H1 (cell line): ENCODE measurements at regions of chr9 and their contacts with region 1.

Region 1: GRCh38 chr9:79152306-79152705 is 419.5 kb upstream of the TLE4 start:
- DNase-seq: no peak
- H3K4me3 ChIP-seq: no peak overlapping the region
- H3K27ac ChIP-seq: no peak overlapping the region
- H3K4me1 ChIP-seq: no peaks in the 10 kb centered on the region
- H3K27me3 ChIP-seq: no peaks in the 10 kb centered on the region
- CTCF ChIP-seq: no peak
- EP300 ChIP-seq: no peak
- POLR2A ChIP-seq: no peak
- RAD21 ChIP-seq: no peak

Region 2: DNA sequence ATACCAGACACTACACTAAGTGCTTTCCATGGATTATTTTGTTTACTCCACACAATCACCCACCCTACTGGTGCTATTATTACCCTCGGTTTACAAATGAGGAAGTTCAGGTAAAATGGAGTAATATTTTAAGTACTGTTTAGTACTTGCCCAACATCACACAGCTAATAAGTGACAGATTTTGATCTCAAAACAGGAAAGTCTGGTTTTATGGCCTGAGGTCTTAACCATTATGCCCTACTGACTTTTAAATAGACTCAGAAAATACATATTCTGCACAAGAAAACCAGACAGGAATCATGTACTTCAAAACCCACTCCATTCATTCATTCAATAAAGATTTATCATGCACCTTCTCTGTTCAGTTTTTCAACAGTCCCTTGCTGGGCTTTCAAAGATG is 11.5 kb before region 1 on chr9:
- CTCF ChIA-PET with region 1: interaction called, 11 read pairs
- POLR2A ChIA-PET with region 1: interaction called, 3 read pairs
- DNase-seq: no peak
- H3K4me3 ChIP-seq: no peak overlapping the region
- H3K27ac ChIP-seq: no peak overlapping the region
- H3K4me1 ChIP-seq: no peaks in the 10 kb centered on the region
- H3K27me3 ChIP-seq: no peaks in the 10 kb centered on the region
- CTCF ChIP-seq: no peak
- EP300 ChIP-seq: no peak
- POLR2A ChIP-seq: no peak
- RAD21 ChIP-seq: no peak

Region 3: GRCh38 chr9:79254900-79255650 is 102.8 kb after region 1 on chr9:
- CTCF ChIA-PET with region 1: interaction called, 11 read pairs
- POLR2A ChIA-PET with region 1: no interaction called
- DNase-seq: no peak
- H3K4me3 ChIP-seq: no peak overlapping the region
- H3K27ac ChIP-seq: no peak overlapping the region
- H3K4me1 ChIP-seq: peaks cover 0 to 9% (median under 1%) of the 10 kb centered on the region in 4 experiments; a peak in 3 of 7 replicates
- H3K27me3 ChIP-seq: no peaks in the 10 kb centered on the region
- CTCF ChIP-seq: peak; percentile 45 to 85 (median 74)
- EP300 ChIP-seq: no peak
- POLR2A ChIP-seq: no peak
- RAD21 ChIP-seq: peak; percentile 90 to 92